Heart right ventricle (tissue), 16 donors: ENCODE measurements at regions of chr1 and their contacts with region 1.

Region 1: DNA sequence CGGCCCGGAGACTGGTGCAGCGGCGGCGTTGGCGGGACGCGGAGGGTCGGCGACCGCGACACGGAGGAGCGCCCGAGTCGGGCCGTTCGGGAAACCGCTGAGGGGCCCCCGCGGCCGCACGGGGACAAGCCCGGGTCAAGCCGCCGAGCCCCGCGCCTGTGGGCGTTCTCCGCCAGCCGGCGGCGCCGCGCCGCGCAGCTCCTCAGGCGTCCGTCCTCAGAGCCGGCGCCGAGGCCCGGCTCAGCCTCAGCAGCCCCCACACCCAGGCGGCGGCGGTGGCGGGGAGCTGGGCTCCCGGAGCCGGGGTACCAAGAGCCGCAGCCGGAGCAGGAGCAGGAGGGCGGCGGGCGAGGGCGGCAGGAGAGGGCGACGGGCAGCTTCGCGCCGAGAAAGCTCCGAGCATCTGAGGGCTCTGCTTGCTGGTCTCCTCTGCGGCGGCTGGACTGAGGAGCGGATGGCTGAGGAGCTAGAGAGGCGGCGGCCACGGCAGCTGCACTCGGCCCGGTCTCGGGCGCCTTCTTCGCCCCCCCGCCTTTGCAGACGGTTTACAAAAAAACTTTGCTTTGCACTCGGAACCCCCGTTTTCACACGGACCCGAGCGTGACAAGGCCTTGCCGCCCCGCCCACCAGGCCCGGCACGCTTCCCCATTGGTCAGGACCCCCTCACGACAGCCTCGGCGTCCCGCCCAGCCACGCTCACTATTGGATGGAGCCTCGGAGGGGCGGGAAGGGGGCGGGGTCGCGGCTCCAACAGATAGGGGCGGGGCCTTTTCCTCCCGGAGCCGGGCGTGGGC is at the start of gene SLC30A1:
- DNase-seq: peak; percentile 100
- ATAC-seq: peak; percentile 96 to 98 (median 98)
- H3K4me3 ChIP-seq: peak within 1 kb of the TSS; percentile 83 to 97 (median 94)
- H3K27ac ChIP-seq: peak within 1 kb of the TSS; percentile 93 to 99 (median 96)
- H3K4me1 ChIP-seq: peaks cover 0 to 72% (median 35%) of the 10 kb centered on the region in 9 donors
- H3K27me3 ChIP-seq: no peaks in the 10 kb centered on the region
- CTCF ChIP-seq: no peak
- total RNA-seq, gene SLC30A1: 8.1 to 26.5 (median 16.1) TPM

Region 2: DNA sequence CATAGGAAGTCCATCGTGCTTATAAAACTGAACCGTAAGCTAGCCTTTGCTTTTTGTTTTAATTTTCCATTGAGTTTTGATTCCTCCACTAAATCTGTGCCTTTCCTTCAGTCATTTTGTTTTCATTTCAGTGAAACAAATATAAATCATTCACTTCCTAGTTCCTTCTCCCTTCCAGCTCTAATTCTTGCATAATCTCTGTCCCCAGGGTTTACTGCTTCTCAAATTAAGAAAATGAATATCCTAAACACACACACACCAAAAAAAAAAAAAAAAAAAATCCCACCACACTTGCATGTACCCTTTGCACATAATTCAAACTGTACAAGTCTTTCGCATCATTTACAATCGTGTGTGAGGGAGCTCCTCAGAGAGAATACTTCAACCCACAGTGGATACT is 451.7 kb before region 1 on chr1:
- intact Hi-C with region 1: no loop called
- DNase-seq: no peak
- ATAC-seq: no peak
- H3K4me3 ChIP-seq: no peak overlapping the region
- H3K27ac ChIP-seq: no peak overlapping the region
- H3K4me1 ChIP-seq: no peaks in the 10 kb centered on the region
- H3K27me3 ChIP-seq: peaks cover 0 to 68% (median 25%) of the 10 kb centered on the region in 7 donors
- CTCF ChIP-seq: no peak

Region 3: GRCh38 chr1:211514030-211514754 is 64.6 kb before region 1 on chr1:
- intact Hi-C with region 1: loop called in 5 of 10 experiments (anchors 2 to 5 kb)
- DNase-seq: peak; percentile 72
- ATAC-seq: peak; percentile 70 to 91 (median 85)
- H3K4me3 ChIP-seq: no peak overlapping the region
- H3K27ac ChIP-seq: peak overlapping the region in 1 of 10 donors; percentile 10
- H3K4me1 ChIP-seq: peaks cover 0 to 22% (median 9%) of the 10 kb centered on the region in 9 donors
- H3K27me3 ChIP-seq: peaks cover 0 to 13% (median 0%) of the 10 kb centered on the region in 7 donors
- CTCF ChIP-seq: peak; percentile 59 to 85 (median 76)

Region 4: GRCh38 chr1:211613093-211613947 is 34.5 kb after region 1 on chr1:
- intact Hi-C with region 1: loop called in 3 of 10 experiments (anchors 5 kb)
- DNase-seq: peak; percentile 73 to 74
- ATAC-seq: peak; percentile 81 to 94 (median 89)
- H3K4me3 ChIP-seq: no peak overlapping the region
- H3K27ac ChIP-seq: peak overlapping the region; percentile 50 to 88 (median 78)
- H3K4me1 ChIP-seq: peaks cover 7 to 56% (median 27%) of the 10 kb centered on the region in 9 donors
- H3K27me3 ChIP-seq: no peaks in the 10 kb centered on the region
- CTCF ChIP-seq: no peak

Region 5: DNA sequence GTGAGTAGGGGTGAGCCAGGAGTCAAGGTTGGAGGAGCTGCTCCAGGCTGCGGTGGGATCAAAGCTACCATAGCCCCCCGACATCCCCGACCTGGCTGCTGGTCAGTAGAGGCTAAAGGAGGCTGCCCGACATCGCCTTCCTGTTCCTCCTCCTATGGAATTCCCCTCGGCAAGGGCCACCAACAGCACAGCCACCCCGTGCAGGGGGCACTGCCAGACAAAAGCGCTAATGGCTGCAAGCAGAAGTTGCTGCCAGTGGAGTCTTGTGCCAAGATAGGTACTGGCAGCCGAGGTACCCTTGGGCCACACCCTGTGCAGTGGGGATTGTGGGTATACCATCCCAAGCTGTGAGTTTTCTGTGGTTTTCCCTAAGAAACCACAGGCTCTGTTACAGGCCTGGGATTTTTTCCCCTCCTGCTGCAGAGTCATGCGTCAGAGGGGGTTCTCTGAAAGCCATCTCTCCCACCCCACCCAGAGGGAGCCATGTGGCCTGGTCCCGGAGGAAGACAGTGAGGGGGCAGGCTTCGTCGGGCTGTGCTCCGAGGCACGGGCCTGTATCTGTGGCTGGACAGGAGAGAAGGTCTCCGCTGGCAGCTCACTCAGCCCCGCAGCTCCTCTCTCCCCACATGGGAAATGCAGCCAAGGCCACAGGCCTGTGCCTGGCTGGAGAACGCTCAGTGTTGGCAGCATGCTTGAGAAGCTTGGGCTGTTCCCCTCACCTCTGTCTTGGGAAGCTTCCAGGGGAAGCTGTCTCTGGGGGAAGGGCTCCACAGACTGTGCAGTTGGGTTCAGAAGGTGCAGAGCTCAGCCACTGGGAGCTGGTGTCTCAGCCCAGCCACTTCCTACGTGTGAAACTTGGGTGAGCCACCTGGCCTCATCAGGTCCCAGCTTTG is 54.0 kb after region 1 on chr1:
- intact Hi-C with region 1: loop called in 3 of 10 experiments (anchors 1 to 5 kb)
- DNase-seq: peak; percentile 63 to 70
- ATAC-seq: peak; percentile 72 to 87 (median 79)
- H3K4me3 ChIP-seq: no peak overlapping the region
- H3K27ac ChIP-seq: peak overlapping the region; percentile 47 to 88 (median 73)
- H3K4me1 ChIP-seq: peaks cover 0 to 45% (median 21%) of the 10 kb centered on the region in 9 donors
- H3K27me3 ChIP-seq: no peaks in the 10 kb centered on the region
- CTCF ChIP-seq: no peak

Region 6: DNA sequence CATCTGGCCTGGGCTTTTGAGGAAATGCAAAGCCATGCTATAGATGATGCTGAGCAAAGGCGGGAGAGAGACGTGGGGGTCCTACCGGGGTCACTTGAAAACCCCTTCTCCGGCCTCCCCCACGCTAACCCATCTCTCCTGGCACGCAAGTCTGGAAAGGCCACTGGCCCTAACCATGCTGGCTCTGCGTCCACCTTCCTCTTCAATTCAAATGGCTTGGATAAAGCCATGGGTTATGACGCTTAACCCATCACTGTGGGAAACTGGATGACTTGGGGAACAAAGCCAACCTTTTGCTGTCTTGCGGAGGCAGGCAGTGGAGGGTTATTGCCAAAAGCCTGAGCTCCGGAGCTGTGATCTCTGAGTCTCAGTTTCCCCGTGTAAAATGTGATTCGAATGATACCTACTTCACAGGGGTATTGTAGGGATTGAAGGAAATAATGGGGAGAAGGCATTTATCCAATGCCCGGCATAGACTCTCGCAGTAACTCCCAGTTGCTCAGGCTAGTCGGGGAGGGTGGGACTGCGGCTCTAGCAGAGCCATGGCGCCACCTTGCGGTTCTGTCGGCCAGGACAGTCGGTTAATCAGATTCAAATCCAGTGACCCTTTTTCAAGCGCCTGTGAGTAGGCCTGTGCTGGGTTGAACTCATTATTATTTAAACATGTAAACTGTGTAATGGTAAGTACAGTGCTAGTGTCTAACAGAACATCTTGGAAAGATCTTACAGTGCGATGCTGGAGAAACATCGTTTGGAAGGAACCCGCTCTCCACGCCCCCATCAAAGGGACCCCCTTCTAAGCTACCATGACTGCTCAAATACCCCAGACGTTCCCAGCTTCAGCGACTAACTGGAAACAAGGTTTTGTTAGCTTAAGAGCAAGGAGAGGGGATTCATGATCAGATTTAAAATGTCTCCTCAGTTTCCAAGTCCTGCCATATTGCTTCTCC is 76.3 kb after region 1 on chr1:
- intact Hi-C with region 1: loop called in 8 of 10 experiments (anchors 1 to 5 kb)
- DNase-seq: peak; percentile 87
- ATAC-seq: peak; percentile 91 to 97 (median 95)
- H3K4me3 ChIP-seq: peak overlapping the region in 4 of 10 donors; percentile 7 to 48 (median 18)
- H3K27ac ChIP-seq: peak overlapping the region in 1 of 10 donors; percentile 7
- H3K4me1 ChIP-seq: peaks cover 0 to 9% (median 0%) of the 10 kb centered on the region in 9 donors
- H3K27me3 ChIP-seq: no peaks in the 10 kb centered on the region
- CTCF ChIP-seq: peak; percentile 88 to 95 (median 94)